ENCODE measurements at regions of chr10 and their contacts with region 1.

Region 1: GRCh38 chr10:91043173-91043910 is 122.5 kb upstream of the ANKRD1 start:
- DNase-seq: peak in 1 of 2 donors; percentile 22
- ATAC-seq: peak; percentile 58 to 90 (median 84)
- H3K4me3 ChIP-seq: no peak overlapping the region
- H3K27ac ChIP-seq: no peak overlapping the region
- H3K4me1 ChIP-seq: peaks cover 0 to 22% (median 0%) of the 10 kb centered on the region in 9 donors
- H3K27me3 ChIP-seq: no peaks in the 10 kb centered on the region
- CTCF ChIP-seq: peak; percentile 15 to 69 (median 50)

Region 2: GRCh38 chr10:91077549-91078071 is 34.3 kb after region 1 on chr10:
- intact Hi-C with region 1: loop called in 1 of 10 experiments (anchors 5 kb)
- DNase-seq: peak; percentile 80 to 87
- ATAC-seq: peak; percentile 88 to 96 (median 94)
- H3K4me3 ChIP-seq: peak overlapping the region in 1 of 10 donors; percentile 13
- H3K27ac ChIP-seq: peak overlapping the region; percentile 57 to 94 (median 88)
- H3K4me1 ChIP-seq: peaks cover 3 to 40% (median 27%) of the 10 kb centered on the region in 9 donors
- H3K27me3 ChIP-seq: no peaks in the 10 kb centered on the region
- CTCF ChIP-seq: no peak